A549 (cell line): ENCODE measurements at regions of chr11 and their contacts with region 1.

Region 1: DNA sequence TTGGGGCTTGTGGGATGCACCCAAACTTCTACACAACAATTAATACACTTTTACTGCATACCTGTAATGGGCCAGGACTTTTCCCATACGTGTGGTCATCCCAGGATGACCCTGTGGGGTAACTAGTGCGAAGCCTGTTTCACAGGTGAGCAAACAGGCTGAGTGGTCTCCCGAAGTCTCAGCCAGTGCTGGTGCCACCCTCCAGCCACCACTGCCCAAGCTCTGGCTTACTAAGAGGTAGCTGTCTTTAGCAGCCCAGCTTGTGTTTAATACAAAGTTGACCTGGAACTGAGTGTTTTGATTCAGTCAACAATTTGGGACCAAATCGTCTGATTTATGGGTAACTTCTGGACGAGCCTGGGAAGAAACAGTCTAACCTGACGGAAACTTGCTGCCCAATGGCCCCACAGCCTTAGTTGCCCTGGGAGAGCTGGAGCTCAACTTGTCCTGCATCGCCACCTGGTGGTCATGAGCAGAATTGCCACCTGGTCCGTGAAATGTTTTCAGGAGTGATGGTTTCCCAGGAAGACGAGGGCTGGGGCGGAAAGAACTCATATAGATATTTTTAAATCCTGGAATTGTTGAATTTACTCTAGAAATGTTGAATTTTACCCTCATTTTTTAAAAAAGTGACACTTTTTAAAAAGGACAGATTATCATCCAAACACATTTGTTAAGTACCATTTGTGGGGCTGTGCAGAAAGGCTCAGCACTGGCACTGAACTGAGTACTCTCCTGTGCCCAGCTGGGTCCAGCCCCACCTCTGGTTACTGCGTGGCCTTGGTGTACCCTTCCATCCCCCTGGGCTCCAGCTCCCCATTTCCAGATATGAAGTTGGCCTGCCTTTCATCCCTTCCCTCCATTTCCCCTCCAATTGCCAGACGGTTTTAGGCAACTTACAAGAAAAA is 95.5 kb upstream of the PARVA start:
- DNase-seq: peak; percentile 77 to 89
- ATAC-seq: peak; percentile 57 to 83; a peak in 5 of 6 replicates
- H3K4me3 ChIP-seq: no peak overlapping the region
- H3K27ac ChIP-seq: peak overlapping the region; percentile 58 to 80
- H3K4me1 ChIP-seq: peaks cover 38% of the 10 kb centered on the region
- CTCF ChIP-seq: peak; percentile 96
- EP300 ChIP-seq: no peak
- POLR2A ChIP-seq: no peak
- RAD21 ChIP-seq: peak; percentile 99 to 100

Region 2: DNA sequence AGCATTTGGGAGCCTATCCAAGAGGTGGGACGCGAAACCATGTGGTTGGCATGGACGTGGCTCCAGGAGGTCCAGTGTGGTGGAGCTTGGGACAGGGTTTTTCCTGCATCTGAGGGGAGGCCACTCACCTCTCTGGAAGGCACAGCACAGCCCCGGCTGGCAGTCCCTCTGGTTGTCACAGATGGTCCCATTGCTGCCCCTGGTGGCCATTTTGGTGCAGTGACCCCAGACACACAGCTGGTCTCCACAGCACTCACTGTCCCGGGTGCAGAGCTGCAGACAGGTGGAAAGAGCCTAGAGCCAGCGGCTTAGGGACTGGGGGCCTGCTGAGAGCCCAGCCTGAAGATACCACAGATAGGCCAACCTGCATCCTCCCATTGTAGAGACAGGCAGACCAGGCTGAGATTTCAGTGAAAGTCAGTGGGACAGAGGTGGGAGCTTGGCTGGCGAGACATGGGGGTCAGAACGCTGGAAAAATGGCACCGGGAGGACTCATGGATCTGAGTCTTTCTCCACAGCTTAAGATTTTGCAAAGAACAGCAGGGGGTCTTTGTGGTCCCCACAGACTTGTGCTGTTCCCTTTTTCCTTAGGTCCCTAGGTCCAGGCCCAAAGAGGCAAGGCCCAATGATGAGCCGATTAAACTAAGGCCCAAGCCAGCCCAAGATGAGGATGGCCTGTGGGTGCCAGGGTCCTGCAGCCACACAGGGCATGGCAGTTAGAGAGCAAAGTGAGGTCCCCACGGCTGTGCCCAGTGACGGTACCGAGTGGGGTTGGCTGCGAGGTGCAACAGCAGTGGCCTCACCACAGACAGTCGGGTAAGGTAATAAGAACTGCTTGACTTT is 314.8 kb before region 1 on chr11:
- CTCF ChIA-PET with region 1: interaction called, 10 read pairs
- POLR2A ChIA-PET with region 1: no interaction called
- DNase-seq: peak; percentile 64 to 90
- ATAC-seq: peak; percentile 88 to 96
- H3K4me3 ChIP-seq: no peak overlapping the region
- H3K27ac ChIP-seq: no peak overlapping the region
- H3K4me1 ChIP-seq: no peaks in the 10 kb centered on the region
- CTCF ChIP-seq: peak; percentile 56
- EP300 ChIP-seq: no peak
- POLR2A ChIP-seq: no peak
- RAD21 ChIP-seq: peak; percentile 48 to 64; a peak in 4 of 5 replicates

Region 3: GRCh38 chr11:12087075-12088004 is 194.5 kb before region 1 on chr11:
- CTCF ChIA-PET with region 1: interaction called, 76 read pairs
- POLR2A ChIA-PET with region 1: interaction called, 8 read pairs
- DNase-seq: peak in 1 of 2 experiments; percentile 81
- ATAC-seq: peak; percentile 65 to 72
- H3K4me3 ChIP-seq: peak overlapping the region; percentile 24; the same call in 1 of the 3 replicates
- H3K27ac ChIP-seq: peak overlapping the region; percentile 96 to 97
- H3K4me1 ChIP-seq: peaks cover 71% of the 10 kb centered on the region
- CTCF ChIP-seq: no peak
- EP300 ChIP-seq: no peak
- POLR2A ChIP-seq: no peak
- RAD21 ChIP-seq: no peak; a peak in 1 of 5 replicates

Region 4: GRCh38 chr11:12137007-12137690 is 144.7 kb before region 1 on chr11:
- CTCF ChIA-PET with region 1: interaction called, 13 read pairs
- POLR2A ChIA-PET with region 1: interaction called, 3 read pairs
- DNase-seq: no peak
- ATAC-seq: peak in 1 of 2 experiments; percentile 16; a peak in 3 of 6 replicates
- H3K4me3 ChIP-seq: no peak overlapping the region
- H3K27ac ChIP-seq: 0 out of 6 replicates have a peak overlapping the region, but pooled peaks of 1 of the 2 experiments have one; percentile 6
- H3K4me1 ChIP-seq: peaks cover 24% of the 10 kb centered on the region
- CTCF ChIP-seq: no peak
- EP300 ChIP-seq: no peak
- POLR2A ChIP-seq: no peak
- RAD21 ChIP-seq: no peak

Region 5: GRCh38 chr11:12251666-12252560 is 29.9 kb before region 1 on chr11:
- CTCF ChIA-PET with region 1: interaction called, 13 read pairs
- POLR2A ChIA-PET with region 1: no interaction called
- DNase-seq: no peak
- ATAC-seq: peak in 1 of 2 experiments; percentile 36; a peak in 2 of 6 replicates
- H3K4me3 ChIP-seq: no peak overlapping the region
- H3K27ac ChIP-seq: no peak overlapping the region
- H3K4me1 ChIP-seq: 0 out of 3 replicates have a peak, but pooled peaks cover 5% of the 10 kb centered on the region
- CTCF ChIP-seq: no peak
- EP300 ChIP-seq: no peak
- POLR2A ChIP-seq: no peak
- RAD21 ChIP-seq: no peak

Region 6: GRCh38 chr11:12354750-12355545 is 73.1 kb after region 1 on chr11:
- CTCF ChIA-PET with region 1: no interaction called
- POLR2A ChIA-PET with region 1: no interaction called
- DNase-seq: no peak
- ATAC-seq: no peak
- H3K4me3 ChIP-seq: no peak overlapping the region
- H3K27ac ChIP-seq: no peak overlapping the region
- H3K4me1 ChIP-seq: no peaks in the 10 kb centered on the region
- CTCF ChIP-seq: no peak
- EP300 ChIP-seq: no peak
- POLR2A ChIP-seq: no peak
- RAD21 ChIP-seq: no peak